Transverse colon (tissue), 4 donors: ENCODE measurements at regions of chr11 and their contacts with region 1.

Region 1: GRCh38 chr11:86035164-86035563 is 33.7 kb downstream of the PICALM start:
- DNase-seq: no peak
- H3K4me3 ChIP-seq: no peak overlapping the region
- H3K27ac ChIP-seq: no peak overlapping the region
- H3K4me1 ChIP-seq: peaks cover 0 to 38% (median 17%) of the 10 kb centered on the region in 4 donors
- H3K27me3 ChIP-seq: no peaks in the 10 kb centered on the region
- CTCF ChIP-seq: no peak
- EP300 ChIP-seq: no peak
- POLR2A ChIP-seq: no peak

Region 2: GRCh38 chr11:85779956-85780640 is 255.1 kb before region 1 on chr11:
- in situ Hi-C with region 1: no loop called
- intact Hi-C with region 1: no loop called
- DNase-seq: no peak
- H3K4me3 ChIP-seq: no peak overlapping the region
- H3K27ac ChIP-seq: peak overlapping the region; percentile 41 to 63 (median 56)
- H3K4me1 ChIP-seq: peaks cover 0 to 54% (median 25%) of the 10 kb centered on the region in 4 donors
- H3K27me3 ChIP-seq: no peaks in the 10 kb centered on the region
- CTCF ChIP-seq: no peak
- EP300 ChIP-seq: no peak
- POLR2A ChIP-seq: no peak

Region 3: DNA sequence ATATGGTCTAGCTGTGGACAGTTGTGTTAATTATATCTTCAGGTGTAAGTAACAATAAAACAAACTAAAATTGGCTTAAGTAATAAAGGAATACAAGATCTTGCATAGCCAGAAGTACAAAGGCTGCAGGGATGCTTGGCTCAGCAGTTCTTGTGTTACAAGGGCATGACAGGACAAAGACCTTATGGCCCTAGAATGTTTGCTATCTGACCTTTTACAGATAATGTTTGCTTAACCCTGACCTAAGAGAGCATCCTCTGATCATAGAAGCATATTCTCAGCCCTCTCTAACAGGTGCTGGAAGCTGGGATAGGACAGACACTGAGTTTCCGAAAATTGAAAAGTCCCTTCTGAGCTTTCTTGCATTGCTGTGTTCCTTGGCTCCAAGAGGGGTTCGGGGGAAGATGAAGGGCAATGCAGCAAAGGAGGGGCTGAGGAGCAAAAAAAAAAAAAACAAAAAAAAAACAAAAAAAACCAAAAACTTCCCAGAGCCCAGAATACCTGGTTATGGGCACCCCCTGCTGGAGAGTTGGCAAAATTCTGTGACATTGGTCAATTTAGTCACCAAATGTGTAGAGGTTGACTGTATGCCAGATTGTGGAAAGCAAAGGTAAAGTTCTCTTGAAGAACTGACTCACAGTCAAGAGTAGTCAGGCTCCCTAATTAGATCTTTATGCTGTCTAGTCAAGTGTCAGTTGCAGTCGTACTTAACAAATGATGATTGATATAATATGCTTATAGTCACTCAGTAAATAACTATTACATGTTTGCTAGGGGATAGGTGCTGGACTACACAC is 256.5 kb after region 1 on chr11:
- in situ Hi-C with region 1: loop called in 1 of 4 experiments (anchors 10 kb)
- intact Hi-C with region 1: no loop called
- DNase-seq: peak; percentile 25
- H3K4me3 ChIP-seq: no peak overlapping the region
- H3K27ac ChIP-seq: no peak overlapping the region
- H3K4me1 ChIP-seq: no peaks in the 10 kb centered on the region
- H3K27me3 ChIP-seq: no peaks in the 10 kb centered on the region
- CTCF ChIP-seq: peak; percentile 47 to 70 (median 63)
- EP300 ChIP-seq: no peak
- POLR2A ChIP-seq: no peak